ENCODE measurements at regions of chr13 and their contacts with region 1.

Region 1: GRCh38 chr13:36275190-36276002 is 22.2 kb downstream of the CCDC169 start:
- DNase-seq: peak; percentile 34
- H3K4me3 ChIP-seq: no peak overlapping the region
- H3K27ac ChIP-seq: no peak overlapping the region
- H3K27me3 ChIP-seq: no peaks in the 10 kb centered on the region
- CTCF ChIP-seq: peak; percentile 68

Region 2: DNA sequence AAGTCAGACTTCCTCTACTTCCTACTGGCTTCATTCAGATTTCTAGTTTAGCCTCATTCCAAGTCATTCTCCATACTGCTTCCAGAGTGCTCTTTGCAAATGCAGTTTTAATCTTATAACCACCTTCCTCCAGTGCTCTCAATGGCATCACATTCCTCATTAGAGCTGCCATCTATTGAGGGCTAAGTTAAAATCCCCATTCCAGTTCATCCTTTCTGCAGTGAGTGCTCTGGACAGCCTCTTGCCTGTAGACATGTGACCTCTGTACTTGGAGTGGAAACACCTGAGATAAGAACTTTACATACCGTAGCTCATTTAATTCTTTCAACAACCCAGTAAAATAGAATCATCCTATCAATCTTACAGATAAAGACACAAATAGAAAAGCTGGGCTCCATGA is 741.1 kb before region 1 on chr13:
- CTCF ChIA-PET with region 1: no interaction called
- POLR2A ChIA-PET with region 1: no interaction called
- DNase-seq: no peak
- H3K4me3 ChIP-seq: no peak overlapping the region
- H3K27ac ChIP-seq: no peak overlapping the region
- H3K27me3 ChIP-seq: no peaks in the 10 kb centered on the region
- CTCF ChIP-seq: no peak

Region 3: DNA sequence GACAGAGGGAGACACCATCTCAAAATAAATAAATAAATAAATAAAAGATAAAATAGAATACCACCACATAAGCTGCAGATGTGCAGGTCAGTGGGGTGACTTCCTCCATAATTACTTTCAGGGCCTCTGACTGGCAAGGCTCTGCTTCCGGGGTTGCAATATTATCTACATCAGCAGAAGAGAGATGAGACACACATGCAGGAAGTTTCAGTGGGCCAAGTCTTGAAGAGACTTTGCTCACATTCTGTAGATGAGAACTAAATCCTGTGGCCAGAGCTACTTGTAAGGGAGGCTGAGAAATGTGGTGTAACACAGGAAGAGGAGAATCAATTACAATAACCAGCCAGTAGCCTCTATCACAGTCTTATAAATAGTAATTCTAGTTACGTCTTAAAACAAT is 709.1 kb before region 1 on chr13:
- CTCF ChIA-PET with region 1: no interaction called
- POLR2A ChIA-PET with region 1: no interaction called
- DNase-seq: no peak
- H3K4me3 ChIP-seq: no peak overlapping the region
- H3K27ac ChIP-seq: no peak overlapping the region
- H3K27me3 ChIP-seq: no peaks in the 10 kb centered on the region
- CTCF ChIP-seq: no peak

Region 4: DNA sequence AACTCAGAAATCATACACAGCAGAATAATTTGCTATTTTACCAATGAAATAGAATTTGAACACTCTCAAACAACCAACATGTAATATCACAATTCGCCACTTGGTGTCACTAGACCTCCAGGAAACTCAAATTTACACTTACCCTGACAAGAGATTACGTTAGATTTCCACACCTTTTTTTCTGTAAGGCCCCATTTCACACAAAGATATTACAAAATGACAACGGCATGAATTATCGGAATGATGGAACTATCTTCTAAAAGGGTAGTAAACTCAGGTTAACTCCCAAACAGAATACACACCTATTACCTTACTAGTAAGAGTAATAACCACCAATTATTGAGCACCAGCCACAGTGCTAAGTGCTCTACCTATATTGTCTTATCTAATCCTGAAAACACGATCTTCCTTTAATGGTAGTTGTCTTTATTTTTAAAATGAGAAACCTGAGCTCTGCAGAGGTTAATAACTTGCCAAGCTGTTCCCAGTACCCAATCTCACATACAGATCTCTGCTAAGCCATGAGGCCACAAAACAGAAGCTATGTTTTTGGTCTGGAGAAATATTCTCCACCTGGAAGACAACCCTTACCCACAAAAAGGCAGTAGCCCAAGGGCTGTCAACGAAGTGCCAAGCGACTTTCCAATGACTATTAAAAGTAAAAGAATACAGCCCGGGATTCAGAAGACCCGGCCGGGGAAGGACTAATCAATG is 296.6 kb before region 1 on chr13:
- CTCF ChIA-PET with region 1: interaction called, 378 read pairs
- POLR2A ChIA-PET with region 1: interaction called, 5 read pairs
- DNase-seq: no peak
- H3K4me3 ChIP-seq: no peak overlapping the region
- H3K27ac ChIP-seq: peak overlapping the region; percentile 43
- H3K27me3 ChIP-seq: no peaks in the 10 kb centered on the region
- CTCF ChIP-seq: peak; percentile 69

Region 5: DNA sequence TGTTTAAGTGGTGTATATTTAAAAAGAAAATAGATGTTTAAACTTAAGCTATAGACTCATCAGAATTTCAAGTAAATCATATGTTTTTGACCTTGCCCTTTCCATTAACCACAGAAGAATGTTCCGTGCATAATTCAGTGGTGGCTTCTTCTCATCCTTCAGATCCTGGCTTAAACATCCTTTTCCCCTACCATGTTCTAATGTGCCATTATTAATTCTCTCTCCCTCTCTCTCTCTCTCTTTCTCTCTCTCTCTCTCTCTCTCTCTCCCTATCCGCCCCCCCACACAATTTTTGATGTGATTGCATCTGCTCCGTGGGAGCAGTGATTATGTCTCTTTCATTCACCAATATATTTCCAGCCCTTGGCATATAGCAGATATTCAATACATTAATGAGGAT is 260.6 kb before region 1 on chr13:
- CTCF ChIA-PET with region 1: no interaction called
- POLR2A ChIA-PET with region 1: no interaction called
- DNase-seq: no peak
- H3K4me3 ChIP-seq: no peak overlapping the region
- H3K27ac ChIP-seq: no peak overlapping the region
- H3K27me3 ChIP-seq: no peaks in the 10 kb centered on the region
- CTCF ChIP-seq: no peak

Region 6: GRCh38 chr13:36261976-36262375 is 13.4 kb before region 1 on chr13:
- CTCF ChIA-PET with region 1: interaction called, 10 read pairs
- POLR2A ChIA-PET with region 1: no interaction called
- DNase-seq: no peak
- H3K4me3 ChIP-seq: no peak overlapping the region
- H3K27ac ChIP-seq: no peak overlapping the region
- H3K27me3 ChIP-seq: no peaks in the 10 kb centered on the region
- CTCF ChIP-seq: no peak

Region 7: GRCh38 chr13:36395280-36395679 is 119.9 kb after region 1 on chr13:
- CTCF ChIA-PET with region 1: interaction called, 90 read pairs
- POLR2A ChIA-PET with region 1: no interaction called
- DNase-seq: peak; percentile 27
- H3K4me3 ChIP-seq: no peak overlapping the region
- H3K27ac ChIP-seq: no peak overlapping the region
- H3K27me3 ChIP-seq: no peaks in the 10 kb centered on the region
- CTCF ChIP-seq: peak; percentile 69

Region 8: GRCh38 chr13:37395566-37395965 is 1120.2 kb after region 1 on chr13:
- CTCF ChIA-PET with region 1: no interaction called
- POLR2A ChIA-PET with region 1: no interaction called
- DNase-seq: no peak
- H3K4me3 ChIP-seq: no peak overlapping the region
- H3K27ac ChIP-seq: no peak overlapping the region
- H3K27me3 ChIP-seq: no peaks in the 10 kb centered on the region
- CTCF ChIP-seq: no peak

Measured in AG04450 (cell line).